Endothelial cell of umbilical vein (primary cell): ENCODE measurements at regions of chr3 and their contacts with region 1.

Region 1: GRCh38 chr3:45210308-45211041 is 15.6 kb downstream of the TMEM158 start:
- DNase-seq: peak; percentile 57
- H3K4me3 ChIP-seq: no peak overlapping the region
- H3K27ac ChIP-seq: no peak overlapping the region
- H3K4me1 ChIP-seq: no peaks in the 10 kb centered on the region
- H3K27me3 ChIP-seq: peaks cover 0 to 2% of the 10 kb centered on the region in 2 experiments
- CTCF ChIP-seq: peak; percentile 76 to 90
- POLR2A ChIP-seq: no peak

Region 2: GRCh38 chr3:45037734-45038455 is 172.6 kb before region 1 on chr3:
- CTCF ChIA-PET with region 1: interaction called, 467 read pairs
- POLR2A ChIA-PET with region 1: no interaction called
- dilution Hi-C with region 1: no loop called
- intact Hi-C with region 1: loop called (anchors 1 kb)
- DNase-seq: peak; percentile 95
- H3K4me3 ChIP-seq: no peak overlapping the region
- H3K27ac ChIP-seq: no peak overlapping the region
- H3K4me1 ChIP-seq: no peaks in the 10 kb centered on the region
- H3K27me3 ChIP-seq: no peaks in the 10 kb centered on the region
- CTCF ChIP-seq: peak; percentile 94 to 95
- POLR2A ChIP-seq: no peak

Region 3: DNA sequence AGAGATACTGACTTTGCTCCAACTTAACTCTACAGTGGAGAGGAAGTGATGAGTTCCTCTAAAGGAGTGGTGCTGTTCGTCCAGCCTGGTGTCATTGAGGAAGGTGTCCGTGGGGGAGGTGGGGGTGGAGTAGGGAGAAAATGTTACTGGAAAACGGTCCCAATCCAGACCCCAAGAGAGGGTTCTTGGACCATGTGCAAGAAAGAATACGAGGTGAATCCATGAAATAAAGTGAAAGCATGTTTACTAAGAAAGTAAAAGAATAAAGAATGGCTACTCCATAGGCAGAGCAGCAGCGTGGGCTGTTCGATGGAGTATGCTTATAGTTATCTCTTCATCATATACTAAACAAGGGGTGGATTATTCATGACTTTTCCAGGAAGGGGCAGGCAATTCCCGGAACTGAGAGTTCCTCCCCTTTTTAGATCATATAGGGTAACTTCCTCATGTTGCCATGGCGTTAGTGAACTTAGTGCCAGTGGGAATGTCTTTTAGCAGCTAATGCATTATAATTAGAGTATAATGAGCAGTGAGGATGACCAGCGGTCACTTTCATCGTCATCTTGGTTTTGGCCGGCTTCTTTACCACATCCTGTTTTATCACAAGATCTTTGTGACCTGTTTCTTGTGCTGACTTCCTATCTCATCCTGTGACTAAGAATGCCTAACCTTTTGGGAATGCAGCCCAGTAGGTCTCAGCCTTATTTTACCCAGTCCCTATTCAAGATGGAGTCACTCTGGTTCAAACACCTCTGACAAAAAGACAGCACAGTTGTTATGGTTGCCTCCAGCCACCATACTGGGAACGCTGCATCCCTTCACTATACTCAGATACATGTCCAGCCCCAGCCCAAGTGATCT is 145.7 kb before region 1 on chr3:
- CTCF ChIA-PET with region 1: interaction called, 15 read pairs
- POLR2A ChIA-PET with region 1: no interaction called
- dilution Hi-C with region 1: no loop called
- intact Hi-C with region 1: no loop called
- DNase-seq: peak; percentile 81
- H3K4me3 ChIP-seq: peak overlapping the region in 1 of 3 experiments; percentile 13
- H3K27ac ChIP-seq: peak overlapping the region; percentile 64
- H3K4me1 ChIP-seq: peaks cover 16% of the 10 kb centered on the region
- H3K27me3 ChIP-seq: no peaks in the 10 kb centered on the region
- CTCF ChIP-seq: no peak
- POLR2A ChIP-seq: no peak

Region 4: DNA sequence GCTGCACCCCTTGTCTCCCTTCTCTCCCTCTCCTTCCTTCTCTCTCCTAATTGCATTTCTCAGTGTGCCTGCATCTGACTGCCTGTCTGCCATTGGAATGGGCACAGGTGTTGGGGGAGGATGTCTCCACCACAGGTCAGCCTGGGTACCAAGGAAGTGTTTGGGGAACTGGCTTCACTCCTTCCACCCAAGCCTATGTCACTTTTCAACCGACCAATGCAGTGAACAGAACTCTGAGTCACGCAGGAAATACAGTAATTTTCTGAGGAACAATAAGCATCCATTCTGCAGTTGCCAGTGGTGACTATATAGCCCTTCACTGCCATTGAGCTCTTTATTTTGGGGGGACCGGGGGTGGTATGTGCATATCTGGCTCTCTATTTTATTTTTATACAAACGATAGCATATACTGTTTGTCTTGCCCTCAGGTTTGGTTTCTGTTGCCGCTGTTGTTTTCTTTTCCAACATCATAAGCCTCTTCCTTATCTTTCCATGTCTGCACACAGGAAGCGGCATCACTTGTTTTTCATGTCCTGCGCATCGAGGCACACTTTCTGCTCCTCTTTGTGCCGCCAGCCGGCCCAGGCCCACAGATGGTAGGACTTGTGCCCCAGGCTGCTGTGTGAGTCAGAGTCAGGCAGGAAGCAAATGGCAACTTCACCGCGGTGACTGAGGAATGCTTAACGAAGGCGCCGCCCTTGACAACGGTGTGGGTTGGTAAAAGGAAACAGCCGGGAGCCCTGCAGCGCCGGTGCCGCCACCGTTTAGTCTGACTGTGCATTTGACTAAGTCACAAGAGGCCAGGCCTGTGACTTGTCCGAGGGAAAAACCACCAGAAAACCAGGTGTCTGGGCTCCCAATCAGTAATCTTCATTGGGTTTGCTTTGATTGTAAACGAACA is 43.2 kb before region 1 on chr3:
- CTCF ChIA-PET with region 1: interaction called, 10 read pairs
- POLR2A ChIA-PET with region 1: no interaction called
- dilution Hi-C with region 1: no loop called
- intact Hi-C with region 1: no loop called
- DNase-seq: peak; percentile 93
- H3K4me3 ChIP-seq: peak overlapping the region in 1 of 3 experiments; percentile 28
- H3K27ac ChIP-seq: peak overlapping the region; percentile 97
- H3K4me1 ChIP-seq: peaks cover 22% of the 10 kb centered on the region
- H3K27me3 ChIP-seq: no peaks in the 10 kb centered on the region
- CTCF ChIP-seq: no peak
- POLR2A ChIP-seq: peak; percentile 11

Region 5: DNA sequence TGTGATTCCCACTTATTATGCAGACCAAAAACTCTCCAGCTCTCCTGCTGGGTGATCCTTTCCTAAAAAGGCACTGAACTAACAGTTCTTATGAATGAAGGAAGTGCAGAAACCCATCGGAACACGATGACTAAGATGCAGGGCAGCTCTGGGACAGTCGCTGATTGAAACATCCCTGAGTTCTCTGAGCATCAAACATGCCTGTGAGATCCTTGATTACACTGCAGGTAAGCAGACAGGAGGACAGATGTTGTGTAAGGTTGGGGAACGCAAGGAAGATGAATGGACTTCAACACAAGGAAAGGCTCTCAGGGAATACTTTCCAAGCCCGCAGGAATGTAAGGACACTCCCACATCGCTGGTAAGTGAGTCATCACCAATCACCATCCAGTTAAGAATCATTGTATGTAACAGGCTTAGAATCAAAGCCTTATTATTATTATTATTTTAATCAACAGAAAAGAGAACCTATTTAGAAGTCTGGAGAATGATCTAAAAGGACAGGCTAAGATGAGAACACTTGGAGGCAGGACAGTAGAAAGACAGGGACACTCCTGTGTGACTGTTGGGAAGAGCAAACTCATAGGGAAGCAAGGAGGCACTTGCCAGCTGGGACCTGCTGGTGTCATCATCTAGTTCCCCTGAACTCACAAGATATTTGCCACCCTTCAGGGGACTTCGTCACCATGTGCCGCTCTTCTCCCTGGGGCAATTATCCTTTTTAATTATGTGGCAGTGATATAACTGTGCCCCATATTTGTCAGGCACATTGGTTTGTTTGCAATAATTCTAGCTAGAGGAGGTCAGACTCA is 10.4 kb before region 1 on chr3:
- CTCF ChIA-PET with region 1: interaction called, 17 read pairs
- POLR2A ChIA-PET with region 1: no interaction called
- dilution Hi-C with region 1: no loop called
- intact Hi-C with region 1: no loop called
- DNase-seq: peak; percentile 12
- H3K4me3 ChIP-seq: no peak overlapping the region
- H3K27ac ChIP-seq: no peak overlapping the region
- H3K4me1 ChIP-seq: peaks cover 4% of the 10 kb centered on the region
- H3K27me3 ChIP-seq: peaks cover 0 to 6% of the 10 kb centered on the region in 2 experiments
- CTCF ChIP-seq: no peak
- POLR2A ChIP-seq: no peak

Region 6: DNA sequence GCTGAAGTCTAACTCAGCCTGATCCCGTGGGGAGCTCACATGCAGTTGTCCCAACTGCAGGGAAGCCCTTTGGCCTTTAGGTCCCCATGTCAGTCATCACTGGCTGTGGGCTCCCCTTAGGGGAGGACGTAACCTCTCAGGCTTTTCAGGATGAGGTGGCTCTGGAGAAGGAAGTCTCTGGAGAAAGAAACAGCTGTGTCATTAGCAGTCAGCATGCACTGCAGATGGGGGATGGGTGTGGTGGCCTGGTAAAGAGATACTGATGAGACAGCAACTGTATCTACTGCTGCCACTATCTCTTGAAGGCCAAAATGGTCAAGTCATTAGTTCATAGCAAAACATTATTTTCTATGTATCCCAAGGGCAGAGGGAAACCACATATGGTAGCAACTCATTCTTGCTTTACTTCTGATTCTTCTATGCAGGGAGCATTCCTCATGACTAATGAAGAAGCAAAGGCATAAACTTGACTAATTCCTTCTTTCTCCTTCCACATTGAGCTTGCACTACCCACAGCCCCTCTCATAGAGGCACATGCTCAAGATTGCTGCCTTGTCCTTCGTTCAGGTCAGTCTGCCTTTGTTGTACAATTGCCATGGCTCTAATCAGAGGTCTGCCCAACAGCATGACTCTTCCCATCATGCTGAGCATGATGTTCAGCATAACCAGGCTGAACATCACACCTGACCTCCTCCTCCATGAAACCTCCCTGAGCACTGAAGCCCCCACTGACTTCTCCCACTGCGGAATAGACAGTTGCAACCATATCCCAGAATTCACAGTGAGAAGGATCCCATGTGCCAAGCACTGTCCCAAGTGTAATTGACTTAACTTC is 63.4 kb after region 1 on chr3:
- CTCF ChIA-PET with region 1: no interaction called
- POLR2A ChIA-PET with region 1: no interaction called
- dilution Hi-C with region 1: no loop called
- intact Hi-C with region 1: no loop called
- DNase-seq: no peak
- H3K4me3 ChIP-seq: no peak overlapping the region
- H3K27ac ChIP-seq: no peak overlapping the region
- H3K4me1 ChIP-seq: no peaks in the 10 kb centered on the region
- H3K27me3 ChIP-seq: peaks cover 4 to 5% of the 10 kb centered on the region in 2 experiments
- CTCF ChIP-seq: no peak
- POLR2A ChIP-seq: no peak